Activated CD4-positive, alpha-beta memory T cell treated with anti-CD3 and anti-CD28 coated beads for 36 hours (primary cell): ENCODE measurements at regions of chr10 and their contacts with region 1.

Region 1: GRCh38 chr10:62224606-62225005 is 44.0 kb downstream of the RTKN2 start:
- DNase-seq: no peak
- H3K4me3 Mint-ChIP-seq: no peak overlapping the region
- H3K27ac Mint-ChIP-seq: peak overlapping the region; percentile 50
- H3K4me1 Mint-ChIP-seq: peaks cover 12% of the 10 kb centered on the region
- H3K27me3 Mint-ChIP-seq: no peaks in the 10 kb centered on the region

Region 2: GRCh38 chr10:61779950-61780659 is 444.5 kb before region 1 on chr10:
- CTCF ChIA-PET with region 1: no interaction called
- POLR2A ChIA-PET with region 1: no interaction called
- intact Hi-C with region 1: loop called (anchors 5 kb)
- DNase-seq: peak; percentile 57
- H3K4me3 Mint-ChIP-seq: no peak overlapping the region
- H3K27ac Mint-ChIP-seq: peak overlapping the region; percentile 60
- H3K4me1 Mint-ChIP-seq: peaks cover 46% of the 10 kb centered on the region
- H3K27me3 Mint-ChIP-seq: peaks cover 2% of the 10 kb centered on the region

Region 3: DNA sequence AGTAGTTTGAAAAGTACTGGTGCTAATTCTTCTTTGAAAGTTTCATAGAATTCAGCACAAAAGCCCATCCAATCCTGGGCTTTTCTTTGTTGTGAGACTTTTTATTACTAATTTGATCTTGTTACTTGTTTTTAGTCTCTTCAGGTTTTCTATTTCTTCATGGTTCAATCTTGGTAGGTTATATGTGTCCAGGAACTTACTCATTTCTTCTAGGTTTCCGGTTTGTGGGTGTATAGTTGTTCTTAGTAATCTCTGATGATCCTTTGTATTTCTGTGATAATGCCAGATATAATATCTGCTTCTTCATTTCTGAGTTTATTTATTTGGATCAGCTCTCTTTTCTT is 103.4 kb before region 1 on chr10:
- CTCF ChIA-PET with region 1: no interaction called
- POLR2A ChIA-PET with region 1: no interaction called
- intact Hi-C with region 1: loop called (anchors 1 kb)
- DNase-seq: no peak
- H3K4me3 Mint-ChIP-seq: no peak overlapping the region
- H3K27ac Mint-ChIP-seq: peak overlapping the region; percentile 59
- H3K4me1 Mint-ChIP-seq: peaks cover 31% of the 10 kb centered on the region
- H3K27me3 Mint-ChIP-seq: no peaks in the 10 kb centered on the region

Region 4: DNA sequence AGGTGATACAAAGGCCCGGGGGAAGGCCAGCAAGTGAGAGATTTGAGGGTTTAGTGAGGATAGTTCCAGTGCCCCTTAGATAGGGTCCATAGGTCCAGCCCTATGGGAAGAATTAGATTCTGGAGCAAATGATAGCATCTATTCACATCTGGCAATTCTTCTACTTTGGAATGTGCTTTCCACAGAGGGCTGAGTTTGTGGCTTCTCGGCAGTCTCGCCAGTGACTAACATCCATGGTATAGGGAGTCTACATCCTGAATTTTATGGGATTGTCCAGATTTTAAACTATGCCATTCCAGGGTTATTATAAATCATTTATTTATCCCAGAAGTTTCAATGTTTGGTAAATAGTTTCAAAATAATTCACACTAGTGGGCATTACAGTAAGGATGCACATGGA is 372.6 kb after region 1 on chr10:
- CTCF ChIA-PET with region 1: no interaction called
- POLR2A ChIA-PET with region 1: no interaction called
- intact Hi-C with region 1: no loop called
- DNase-seq: no peak
- H3K4me3 Mint-ChIP-seq: no peak overlapping the region
- H3K27ac Mint-ChIP-seq: no peak overlapping the region
- H3K4me1 Mint-ChIP-seq: peaks cover 2% of the 10 kb centered on the region
- H3K27me3 Mint-ChIP-seq: peaks cover 2% of the 10 kb centered on the region